Breast epithelium (tissue), 4 donors: ENCODE measurements at regions of chr2 and their contacts with region 1.

Region 1: GRCh38 chr2:10019174-10019573 is 24.2 kb upstream of the KLF11 start:
- DNase-seq: no peak
- H3K4me3 ChIP-seq: no peak overlapping the region
- H3K27ac ChIP-seq: peak overlapping the region in 1 of 2 donors; percentile 58
- H3K4me1 ChIP-seq: no peaks in the 10 kb centered on the region
- H3K27me3 ChIP-seq: no peaks in the 10 kb centered on the region
- CTCF ChIP-seq: no peak
- POLR2A ChIP-seq: no peak

Region 2: GRCh38 chr2:9984217-9984739 is 34.9 kb before region 1 on chr2:
- intact Hi-C with region 1: loop called (anchors 1 kb)
- DNase-seq: no peak
- H3K4me3 ChIP-seq: no peak overlapping the region
- H3K27ac ChIP-seq: peak overlapping the region; percentile 2 to 45
- H3K4me1 ChIP-seq: peaks cover 0 to 6% of the 10 kb centered on the region in 2 donors
- H3K27me3 ChIP-seq: no peaks in the 10 kb centered on the region
- CTCF ChIP-seq: peak; percentile 78 to 84 (median 79)
- POLR2A ChIP-seq: no peak